Right ventricle myocardium superior (tissue), 1 donor: ENCODE measurements at regions of chr2 and their contacts with region 1.

Region 1: GRCh38 chr2:1546023-1546591 is 132.8 kb downstream of the TPO start:
- DNase-seq: no peak
- ATAC-seq: peak; percentile 34

Region 2: DNA sequence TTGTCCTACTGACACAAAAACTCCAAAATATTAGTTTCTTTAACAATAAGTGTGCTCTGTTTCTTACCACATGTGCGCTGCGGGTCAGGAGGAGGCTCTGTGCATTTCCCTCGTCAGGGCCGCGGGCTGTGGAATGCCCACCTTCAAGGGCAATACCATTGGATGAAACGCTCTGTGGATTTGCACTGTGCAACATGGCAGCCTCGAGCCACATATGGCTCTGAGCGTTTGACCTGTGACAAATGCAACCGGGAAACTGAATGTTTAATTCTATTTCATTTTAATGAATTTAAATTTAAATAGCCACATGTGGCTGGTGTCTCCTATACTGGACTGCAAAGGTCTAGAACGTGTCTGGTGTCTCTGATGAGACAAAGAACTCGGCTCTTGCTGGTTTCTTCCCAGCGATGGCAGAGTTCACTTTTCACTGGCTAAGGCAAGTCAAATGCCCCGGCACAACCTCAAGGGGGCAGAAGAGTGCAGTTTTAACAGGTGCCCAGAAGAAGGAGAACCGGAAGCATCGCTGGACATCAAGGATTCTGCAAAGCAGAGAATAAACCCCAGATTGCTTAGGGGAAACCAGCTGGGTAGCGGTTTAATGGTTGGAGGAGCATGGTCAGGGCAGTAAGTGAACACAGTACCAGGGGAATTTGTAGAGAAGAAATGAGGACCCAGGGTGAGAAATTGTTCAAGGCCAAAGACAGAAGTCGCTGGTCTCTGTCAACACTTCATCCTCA is 831.9 kb before region 1 on chr2:
- intact Hi-C with region 1: loop called (anchors 5 kb)
- DNase-seq: no peak
- ATAC-seq: peak; percentile 68

Region 3: DNA sequence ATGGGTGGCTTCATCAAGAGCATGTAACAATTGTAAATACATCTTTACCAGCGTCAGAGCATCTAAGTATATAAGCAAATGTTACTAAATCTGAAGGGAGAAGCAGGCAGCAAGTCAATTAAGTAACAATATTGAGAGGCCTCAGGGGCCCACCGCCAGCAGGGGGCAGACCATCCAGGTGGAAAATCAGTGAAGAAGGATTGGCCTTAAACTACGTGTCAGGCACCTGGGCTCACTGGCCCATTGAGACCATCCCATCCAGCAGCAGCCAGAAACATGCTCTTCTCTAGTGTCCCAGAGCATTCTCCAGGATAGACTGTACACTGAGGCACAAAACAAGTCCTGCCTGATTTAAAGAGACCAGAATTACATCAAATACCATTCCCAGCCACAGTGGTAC is 691.6 kb before region 1 on chr2:
- intact Hi-C with region 1: loop called (anchors 5 kb)
- DNase-seq: peak; percentile 58
- ATAC-seq: no peak

Region 4: DNA sequence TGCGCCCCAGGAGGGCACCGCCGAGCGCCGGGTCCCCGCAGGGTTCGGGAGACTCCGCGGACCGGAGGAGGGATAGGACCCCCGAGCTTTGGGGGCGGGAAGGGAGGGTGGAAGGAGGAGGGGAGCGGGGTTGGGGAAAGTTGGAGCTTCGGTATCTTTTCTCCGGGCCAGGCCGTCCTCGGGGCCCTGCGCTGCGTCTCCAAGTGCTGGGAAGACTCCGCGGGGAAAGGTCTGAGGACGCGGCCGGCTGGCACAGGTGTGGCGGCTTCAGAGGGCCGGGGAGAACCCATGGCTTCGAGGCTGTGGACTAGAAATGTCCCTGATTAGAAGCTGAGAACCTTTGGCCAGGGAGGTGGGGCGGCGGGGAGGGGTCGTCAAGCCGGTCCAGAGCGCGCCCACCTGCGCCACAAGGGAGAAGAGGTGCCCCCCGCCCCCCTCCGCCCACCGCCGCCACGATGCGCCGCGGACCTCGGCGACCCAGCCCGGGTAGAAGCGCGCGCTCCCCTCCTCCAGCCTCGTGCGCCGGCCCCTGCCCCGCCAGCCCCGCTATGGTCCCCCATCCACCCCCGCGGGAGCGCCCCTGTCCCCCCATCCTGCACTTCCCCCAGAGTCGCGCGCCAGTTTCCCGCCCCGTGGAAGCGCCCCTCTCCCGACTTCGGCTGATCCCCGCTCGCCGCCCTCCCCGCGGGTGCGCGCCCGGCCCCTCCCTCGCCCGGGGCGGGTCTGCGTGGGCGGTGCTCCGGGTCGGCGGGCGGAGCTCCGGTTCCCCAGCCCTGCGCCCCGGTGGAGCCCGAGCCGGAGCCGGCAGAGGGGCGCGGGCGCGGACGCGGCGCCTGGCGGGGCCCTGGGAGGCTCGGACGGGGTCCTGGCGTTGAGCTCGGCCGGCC is 595.8 kb before region 1 on chr2 and contains the start of gene SNTG2:
- intact Hi-C with region 1: loop called (anchors 5 kb)
- DNase-seq: peak; percentile 47
- ATAC-seq: peak; percentile 82
- total RNA-seq, gene SNTG2: 0.73 TPM

Region 5: GRCh38 chr2:1923541-1923940 is 377.4 kb after region 1 on chr2:
- intact Hi-C with region 1: no loop called
- DNase-seq: no peak
- ATAC-seq: no peak